AG04449 (cell line): ENCODE measurements at regions of chr5 and their contacts with region 1.

Region 1: DNA sequence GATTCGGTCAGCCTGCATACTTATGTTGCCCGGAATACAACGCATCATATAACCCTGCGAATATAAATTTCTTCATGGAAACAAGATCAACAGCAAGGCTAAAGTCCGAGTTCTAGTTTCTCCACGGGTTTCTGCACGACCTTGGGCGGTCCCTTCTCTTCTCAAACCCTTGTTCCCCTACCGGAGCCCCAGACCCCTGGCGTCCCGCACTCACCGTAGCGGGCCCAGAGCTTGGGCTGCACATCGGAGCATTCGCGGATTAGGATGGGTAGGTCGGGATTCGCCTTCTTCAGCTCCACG is 438 bp downstream of the NDUFA2 start:
- DNase-seq: no peak
- H3K4me3 ChIP-seq: peak overlapping the region; percentile 95
- CTCF ChIP-seq: no peak

Region 2: DNA sequence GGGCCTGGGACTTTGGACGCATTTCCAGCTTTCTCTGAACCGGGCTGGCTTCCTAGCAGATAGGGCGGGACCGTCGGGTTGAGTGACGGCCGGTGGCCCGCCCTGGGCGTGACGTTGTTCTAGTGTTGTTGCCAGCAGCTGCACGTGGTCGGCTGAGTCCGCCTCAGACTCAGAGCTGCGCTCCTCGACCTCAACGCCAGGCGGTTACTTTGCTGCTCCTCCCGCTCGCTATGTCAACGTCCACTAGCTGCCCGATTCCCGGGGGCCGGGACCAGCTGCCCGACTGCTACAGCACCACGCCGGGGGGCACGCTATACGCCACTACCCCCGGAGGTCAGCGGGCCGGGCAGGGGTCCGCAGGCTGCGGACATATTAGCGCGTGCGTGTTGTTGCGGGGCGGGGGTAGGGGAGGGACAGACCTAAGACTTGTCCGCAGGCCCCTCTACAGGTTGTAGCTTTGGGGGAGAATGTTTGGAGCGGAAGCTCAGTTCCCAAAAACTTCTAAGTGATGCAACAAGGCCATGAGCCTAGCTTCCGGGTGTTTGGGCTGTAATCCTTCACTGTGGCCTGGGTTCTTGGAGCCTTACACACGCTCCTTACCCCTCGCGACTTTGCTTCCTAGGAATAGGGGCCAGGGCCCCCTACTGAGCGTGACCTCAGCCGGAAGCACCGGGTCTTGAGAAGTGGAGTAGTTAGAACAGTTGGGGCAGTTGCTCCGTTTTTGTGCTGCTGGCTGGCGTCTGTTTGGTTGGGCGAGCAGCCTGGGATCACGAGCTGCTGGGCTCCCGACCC is 99.3 kb before region 1 on chr5 and contains the start of gene EIF4EBP3:
- CTCF ChIA-PET with region 1: interaction called, 4 read pairs
- POLR2A ChIA-PET with region 1: interaction called, 24 read pairs
- DNase-seq: peak; percentile 77
- H3K4me3 ChIP-seq: peak within 1 kb of the TSS; percentile 49
- CTCF ChIP-seq: peak; percentile 70

Region 3: DNA sequence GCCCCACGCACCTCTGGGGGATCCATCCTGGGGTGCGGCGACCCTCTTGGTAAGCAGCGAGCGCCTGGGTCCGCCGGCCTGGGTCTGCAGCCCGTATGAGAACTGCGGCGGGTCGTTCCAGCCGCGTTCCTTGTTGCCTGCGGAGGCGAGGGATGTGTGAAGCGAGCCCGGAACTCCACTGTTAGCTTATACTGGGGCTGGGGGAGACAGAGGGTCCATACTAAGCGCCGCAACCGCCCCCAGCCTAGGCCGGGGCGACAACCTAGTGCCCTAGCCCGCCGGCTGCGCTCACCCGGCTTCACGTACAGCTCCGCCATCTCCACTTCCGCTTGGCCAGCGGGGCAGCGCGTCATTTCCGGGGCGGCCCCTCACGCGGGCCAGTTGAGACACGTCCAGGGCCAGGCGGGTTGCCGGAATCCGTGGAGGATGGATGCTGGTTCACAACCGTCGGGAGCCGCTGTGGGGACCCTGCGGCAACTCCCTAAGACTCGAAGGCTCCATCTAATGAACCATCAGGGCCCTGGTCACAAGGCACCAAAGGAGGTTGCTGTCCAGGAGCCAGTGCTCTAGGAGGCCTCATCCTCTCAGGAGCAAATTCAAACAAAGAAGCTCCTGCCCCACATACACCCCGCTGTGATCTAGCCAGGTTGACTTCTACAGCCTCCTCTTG is 89.7 kb before region 1 on chr5 and contains the start of gene SRA1:
- CTCF ChIA-PET with region 1: no interaction called
- POLR2A ChIA-PET with region 1: interaction called, 13 read pairs
- DNase-seq: no peak
- H3K4me3 ChIP-seq: peak within 1 kb of the TSS; percentile 86
- CTCF ChIP-seq: peak; percentile 4

Region 4: DNA sequence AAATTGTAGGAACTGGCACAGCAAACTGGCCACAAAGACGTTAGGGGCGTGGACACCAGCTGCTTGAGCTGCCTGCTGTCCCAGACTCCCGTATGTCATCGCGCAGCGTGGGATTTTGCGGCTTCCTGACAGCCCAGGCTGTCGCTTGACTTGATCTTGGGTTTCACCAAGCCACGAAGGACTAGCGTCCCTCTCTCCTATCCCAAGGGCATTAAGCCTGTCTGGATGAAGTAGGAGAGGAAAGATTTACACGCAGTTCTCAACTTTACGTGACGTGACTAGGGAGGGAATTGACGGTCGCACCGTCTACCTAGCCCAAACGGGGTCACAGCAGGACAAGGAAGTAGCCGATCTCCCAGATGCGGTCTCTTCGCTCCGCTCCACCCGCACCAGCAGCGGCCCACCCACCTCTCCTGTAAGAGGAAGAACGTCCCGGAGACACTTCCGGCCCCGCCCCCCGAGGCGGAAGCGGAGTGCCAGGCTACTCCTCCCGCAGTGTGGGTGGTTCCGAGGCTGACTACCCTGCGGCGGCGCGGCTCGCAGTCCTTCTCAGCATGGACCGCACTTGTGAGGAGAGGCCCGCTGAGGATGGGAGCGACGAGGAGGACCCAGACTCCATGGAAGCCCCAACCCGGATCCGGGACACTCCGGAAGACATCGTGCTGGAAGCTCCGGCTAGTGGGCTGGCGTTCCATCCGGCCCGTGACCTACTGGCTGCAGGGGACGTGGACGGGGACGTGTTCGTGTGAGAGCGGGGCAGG is 17.5 kb after region 1 on chr5 and contains the start of gene WDR55:
- CTCF ChIA-PET with region 1: interaction called, 4 read pairs
- POLR2A ChIA-PET with region 1: interaction called, 18 read pairs
- DNase-seq: peak; percentile 37
- H3K4me3 ChIP-seq: peak within 1 kb of the TSS; percentile 96
- CTCF ChIP-seq: no peak

Region 5: DNA sequence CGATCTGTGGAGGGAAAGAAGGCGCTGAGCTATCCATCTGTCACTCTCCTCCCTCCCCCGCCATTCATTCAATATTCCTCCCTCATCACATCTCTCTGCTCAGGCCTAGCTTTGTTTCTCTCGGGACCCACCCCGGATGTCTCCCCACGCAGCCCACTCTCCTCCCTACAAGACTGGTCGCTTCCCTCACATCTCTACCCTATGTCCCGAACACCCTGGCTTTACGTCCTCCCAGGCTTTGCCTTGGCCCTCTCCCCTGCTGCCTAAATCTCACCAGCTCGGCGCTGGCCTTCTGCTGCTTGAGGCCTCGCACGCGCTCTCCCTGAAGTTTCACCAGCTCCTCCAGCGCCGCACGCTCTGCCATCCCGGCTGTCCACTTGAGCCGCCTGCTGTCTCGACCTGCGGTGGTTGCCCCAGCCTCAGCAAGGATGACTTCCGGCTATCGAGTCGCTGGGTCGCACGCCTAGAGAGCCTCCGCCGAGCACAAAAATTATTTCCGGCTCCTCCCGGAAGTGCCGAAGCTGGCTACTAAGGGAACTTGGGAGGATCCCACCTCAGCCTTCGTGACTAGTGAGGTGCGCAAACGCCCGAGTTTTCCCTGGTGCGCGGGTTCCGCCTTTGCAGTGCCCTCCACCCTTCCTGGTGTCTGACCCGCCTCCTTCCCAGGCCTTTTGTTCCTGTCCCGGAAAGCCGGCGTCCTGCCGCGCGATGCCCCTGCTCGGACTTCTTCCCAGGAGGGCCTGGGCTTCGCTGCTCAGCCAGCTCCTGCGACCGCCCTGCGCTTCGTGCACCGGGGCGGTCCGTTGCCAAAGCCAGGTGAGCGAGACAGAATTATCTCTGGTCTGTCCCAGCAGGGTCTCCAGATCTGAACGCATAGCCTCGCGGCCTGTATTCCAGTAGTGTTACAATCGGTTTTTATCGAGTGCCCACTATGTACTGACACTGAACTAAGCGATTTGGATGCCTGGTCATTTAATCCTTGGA is 44.2 kb after region 1 on chr5 and contains the starts of genes HARS1 and HARS2:
- CTCF ChIA-PET with region 1: no interaction called
- POLR2A ChIA-PET with region 1: interaction called, 16 read pairs
- DNase-seq: peak; percentile 54
- H3K4me3 ChIP-seq: peak within 1 kb of the TSS; percentile 87
- CTCF ChIP-seq: peak; percentile 5